ENCODE measurements at regions of chr1 and their contacts with region 1.

Region 1: DNA sequence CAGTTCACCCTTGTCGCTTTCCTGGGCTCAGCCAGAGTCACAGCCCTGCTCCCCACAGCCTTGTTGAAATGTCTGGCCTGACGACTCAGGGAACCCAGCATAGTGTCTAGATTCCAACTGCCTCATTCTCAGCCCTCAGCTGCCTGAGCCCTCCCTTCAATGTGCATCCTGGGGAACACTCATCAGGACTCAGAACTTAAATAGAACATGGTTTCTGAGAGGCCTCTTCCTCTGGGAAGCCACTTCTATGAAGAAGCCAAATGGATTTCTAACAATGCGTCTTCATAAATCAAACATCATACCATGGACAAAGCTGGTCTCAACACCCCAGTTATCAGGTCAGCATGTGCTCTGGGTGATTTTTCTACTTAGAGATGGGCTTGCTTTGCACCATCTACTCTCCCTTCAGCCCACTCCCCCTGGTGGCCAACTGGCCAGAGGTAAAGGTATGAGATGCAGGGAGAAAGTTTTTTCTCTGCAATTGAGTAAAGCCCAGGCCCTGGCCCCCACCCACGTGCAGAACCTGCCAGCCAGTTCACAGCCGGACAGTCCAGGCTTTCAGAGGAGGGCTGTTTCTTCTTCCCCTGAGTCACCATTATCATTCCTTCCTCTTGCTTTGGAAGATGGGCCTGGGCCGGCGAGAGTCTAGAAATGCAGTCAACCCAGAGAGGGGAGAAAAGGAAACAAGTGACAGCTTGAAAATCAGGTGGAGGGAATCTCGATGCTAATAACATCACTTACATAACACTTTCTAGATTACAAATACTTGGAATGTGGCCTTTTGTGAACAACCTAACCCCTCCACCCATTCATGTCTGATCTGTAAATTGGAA is 32.1 kb downstream of the CD244 start:
- DNase-seq: peak; percentile 56
- ATAC-seq: peak; percentile 83
- H3K4me3 Mint-ChIP-seq: no peak overlapping the region
- H3K27ac Mint-ChIP-seq: peak overlapping the region; percentile 68
- H3K4me1 Mint-ChIP-seq: peaks cover 9% of the 10 kb centered on the region
- H3K27me3 Mint-ChIP-seq: no peaks in the 10 kb centered on the region
- CTCF ChIP-seq: no peak

Region 2: DNA sequence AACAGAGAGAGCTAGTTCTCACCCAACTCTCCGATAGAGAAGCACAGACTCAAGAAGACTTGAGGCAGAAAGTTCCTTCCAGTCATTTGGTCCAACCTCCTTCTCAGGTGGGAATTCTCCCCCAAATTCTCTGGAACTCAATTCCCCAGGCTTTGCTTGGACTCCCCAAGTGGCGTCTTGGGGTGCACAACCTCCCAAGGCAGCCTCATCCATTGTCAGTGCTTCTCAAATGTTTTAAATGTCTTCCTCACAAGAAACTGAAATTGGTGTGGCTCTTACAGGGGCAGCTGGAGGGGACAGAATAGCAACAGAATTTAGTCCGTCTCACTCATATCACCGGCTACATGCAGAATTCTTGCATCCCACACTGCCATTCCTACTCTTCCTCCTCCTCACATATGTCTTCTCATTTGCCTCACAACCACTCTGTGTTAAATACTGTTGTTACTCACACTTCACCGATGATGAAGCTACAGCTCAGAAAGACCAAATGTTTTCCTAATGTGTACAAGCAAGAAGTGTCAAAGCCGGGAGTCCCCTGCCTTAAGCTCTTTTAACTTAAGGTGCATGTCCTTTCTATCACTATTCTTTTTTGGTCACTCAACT is 217.8 kb before region 1 on chr1:
- CTCF ChIA-PET with region 1: no interaction called
- POLR2A ChIA-PET with region 1: no interaction called
- intact Hi-C with region 1: no loop called
- DNase-seq: no peak
- ATAC-seq: no peak
- H3K4me3 Mint-ChIP-seq: no peak overlapping the region
- H3K27ac Mint-ChIP-seq: no peak overlapping the region
- H3K4me1 Mint-ChIP-seq: peaks cover 14% of the 10 kb centered on the region
- H3K27me3 Mint-ChIP-seq: no peaks in the 10 kb centered on the region
- CTCF ChIP-seq: no peak

Region 3: DNA sequence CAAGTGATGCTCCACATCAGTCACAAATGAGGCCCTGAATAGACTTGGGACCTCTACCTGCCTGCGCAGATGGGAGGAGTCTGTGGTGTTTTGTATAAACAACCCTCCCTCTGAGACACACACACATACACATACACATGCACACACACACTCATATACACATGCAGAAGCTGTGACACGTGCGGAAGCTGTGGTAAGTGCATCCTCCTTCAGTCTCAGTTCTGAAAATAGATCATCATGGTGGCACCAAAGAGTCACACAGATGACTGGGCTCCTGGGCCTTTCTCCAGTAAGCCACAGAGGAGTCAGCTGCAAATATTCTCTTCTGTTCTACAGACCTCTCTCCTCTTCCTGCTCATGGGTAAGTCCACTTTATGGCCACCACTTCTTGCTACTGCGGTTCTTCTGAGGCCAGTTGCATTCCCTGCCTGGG is 34.6 kb before region 1 on chr1 and contains the start of gene LY9:
- CTCF ChIA-PET with region 1: interaction called, 13 read pairs
- POLR2A ChIA-PET with region 1: interaction called, 3 read pairs
- intact Hi-C with region 1: loop called (anchors 5 kb)
- DNase-seq: peak; percentile 46
- ATAC-seq: peak; percentile 87
- H3K4me3 Mint-ChIP-seq: peak within 1 kb of the TSS; percentile 95
- H3K27ac Mint-ChIP-seq: peak within 1 kb of the TSS; percentile 99
- H3K4me1 Mint-ChIP-seq: peaks cover 81% of the 10 kb centered on the region
- H3K27me3 Mint-ChIP-seq: no peaks in the 10 kb centered on the region
- CTCF ChIP-seq: no peak
- total RNA-seq, gene LY9: 63.6 and 71.6 TPM in 2 replicates

Region 4: DNA sequence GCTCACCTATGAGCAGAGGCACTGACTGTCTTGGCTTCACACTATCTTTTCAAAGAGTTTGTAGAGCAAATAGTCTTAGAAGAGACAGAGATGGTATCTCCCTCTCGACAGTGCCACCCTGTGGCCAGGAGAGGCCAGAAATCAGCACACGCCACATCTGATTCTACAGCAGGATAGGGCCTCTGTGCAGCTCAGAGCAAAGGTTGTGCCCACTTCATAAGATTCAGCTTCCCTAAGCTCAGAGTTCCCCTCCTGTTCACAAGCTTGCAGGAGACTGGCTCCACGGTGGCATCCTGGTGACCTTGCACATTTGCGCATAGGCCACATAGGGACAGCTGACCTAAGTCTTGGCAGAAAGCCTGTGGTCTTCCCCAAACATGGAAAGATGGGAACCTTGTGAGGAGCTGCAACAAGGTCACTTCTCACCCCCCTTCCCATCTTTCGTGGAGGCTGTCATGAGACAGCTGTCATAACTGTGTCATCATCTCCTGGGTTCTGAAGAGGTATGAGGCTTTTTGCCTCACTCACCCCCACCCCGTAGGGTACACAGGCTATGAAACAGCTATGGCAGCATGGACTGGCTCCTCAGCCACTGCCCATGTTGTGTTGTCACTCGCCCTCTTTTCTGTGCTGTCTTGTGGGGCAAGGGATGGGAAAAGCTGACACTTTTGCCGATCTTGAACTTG is 121.0 kb after region 1 on chr1:
- CTCF ChIA-PET with region 1: interaction called, 111 read pairs
- POLR2A ChIA-PET with region 1: no interaction called
- intact Hi-C with region 1: no loop called
- DNase-seq: peak; percentile 46
- ATAC-seq: peak; percentile 89
- H3K4me3 Mint-ChIP-seq: no peak overlapping the region
- H3K27ac Mint-ChIP-seq: no peak overlapping the region
- H3K4me1 Mint-ChIP-seq: peaks cover 7% of the 10 kb centered on the region
- H3K27me3 Mint-ChIP-seq: no peaks in the 10 kb centered on the region
- CTCF ChIP-seq: no peak

Measured in activated B cell treated with CpG ODN at 0.5 μM for 24 hours (primary cell).